ENCODE measurements at regions of chr17 and their contacts with region 1.

Region 1: DNA sequence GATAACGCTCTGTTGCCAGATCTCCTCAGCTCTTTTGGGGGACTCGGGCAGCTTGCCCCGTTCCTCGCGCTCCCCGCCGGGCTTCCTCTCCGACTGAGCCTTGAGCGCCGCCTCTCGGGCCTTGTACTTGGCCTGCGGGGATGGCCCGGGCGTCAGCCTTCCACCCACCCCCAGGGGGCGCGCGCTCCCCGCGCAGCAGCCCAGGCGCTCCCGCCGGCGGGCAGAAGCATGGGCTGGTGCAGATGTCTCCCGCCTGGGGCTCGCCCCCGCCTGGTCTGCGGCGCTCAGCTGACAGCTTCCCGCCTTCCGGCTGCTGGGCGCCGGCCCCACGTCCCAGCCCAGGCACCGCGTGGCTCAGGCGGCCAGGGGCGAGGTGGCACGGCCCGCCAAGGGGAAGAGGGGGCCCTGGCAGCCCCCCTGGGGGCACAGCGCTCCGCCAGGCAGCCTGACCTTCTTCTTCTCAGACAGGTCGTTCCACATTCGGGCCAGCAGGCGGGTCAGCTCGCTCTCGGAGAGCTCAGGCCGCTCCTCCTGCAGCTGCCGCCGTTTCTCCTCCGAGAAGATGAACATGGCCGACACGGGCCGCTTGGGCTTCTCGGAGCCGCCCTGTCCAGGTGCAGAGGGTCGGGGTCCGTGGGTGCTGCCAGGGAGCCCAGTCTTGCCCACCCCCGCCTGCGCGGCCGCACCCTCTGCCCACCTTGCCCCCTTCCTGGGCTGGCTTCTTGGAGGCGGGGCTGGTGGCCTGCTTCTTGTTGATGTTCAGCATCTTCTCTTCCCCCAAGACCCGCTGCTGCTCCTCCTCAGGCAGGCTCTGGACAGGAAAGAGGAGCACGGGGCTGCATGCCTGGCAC is 8.9 kb downstream of the UBTF start:
- DNase-seq: peak; percentile 90
- H3K4me3 Mint-ChIP-seq: peak overlapping the region; percentile 56
- H3K27ac Mint-ChIP-seq: peak overlapping the region; percentile 88
- H3K4me1 Mint-ChIP-seq: peaks cover 53% of the 10 kb centered on the region
- H3K27me3 Mint-ChIP-seq: no peaks in the 10 kb centered on the region

Region 2: GRCh38 chr17:44110823-44111633 is 99.5 kb before region 1 on chr17:
- CTCF ChIA-PET with region 1: no interaction called
- POLR2A ChIA-PET with region 1: no interaction called
- DNase-seq: peak; percentile 65
- H3K4me3 Mint-ChIP-seq: peak overlapping the region; percentile 30
- H3K27ac Mint-ChIP-seq: no peak overlapping the region
- H3K4me1 Mint-ChIP-seq: peaks cover 22% of the 10 kb centered on the region
- H3K27me3 Mint-ChIP-seq: no peaks in the 10 kb centered on the region

Region 3: DNA sequence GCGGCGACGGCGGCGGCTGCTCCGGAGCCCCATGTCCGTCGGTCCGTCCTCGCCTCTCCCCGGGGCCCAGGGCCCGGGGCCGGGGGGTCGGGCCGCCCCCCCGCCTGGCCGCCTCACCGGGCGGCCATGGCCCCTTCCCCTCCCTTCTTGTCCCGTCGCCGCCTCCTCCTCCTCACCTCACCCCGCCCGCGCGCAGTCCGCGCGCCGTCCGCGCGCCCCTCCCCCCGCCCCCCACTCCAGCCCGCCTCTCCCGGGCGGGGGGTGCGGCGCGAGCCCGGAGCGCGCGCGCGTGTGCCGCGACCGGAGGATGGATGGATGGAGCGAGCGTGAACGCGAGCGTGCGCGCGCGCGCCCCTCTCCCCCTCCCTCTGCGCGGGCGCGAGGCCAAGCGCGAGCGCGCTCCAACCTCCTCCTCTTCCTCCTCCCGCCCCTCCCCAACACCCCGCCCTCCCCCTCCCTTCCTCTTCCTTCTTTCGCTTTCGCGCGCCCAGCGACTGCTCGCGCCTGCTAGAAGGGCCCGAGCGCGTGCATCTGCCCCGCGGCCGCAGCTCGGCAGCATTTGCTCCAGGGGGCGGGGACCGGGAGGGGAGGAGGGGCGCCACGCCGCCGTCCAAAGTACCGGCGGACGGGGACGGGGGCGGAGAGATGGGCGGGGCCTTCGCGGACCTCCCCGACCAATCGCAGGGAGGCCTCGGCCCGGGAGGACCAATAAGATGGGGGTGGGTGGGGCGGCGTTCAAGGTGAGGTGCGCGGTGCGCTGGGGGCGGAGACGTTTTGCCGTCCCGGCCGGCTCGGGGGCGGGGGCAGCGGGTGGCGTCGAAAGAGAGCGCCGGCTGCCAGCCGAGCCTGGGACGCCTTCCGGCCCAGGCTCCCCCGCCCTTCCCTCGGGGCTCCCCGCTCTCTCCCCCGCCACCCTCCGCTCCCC is 10.8 kb before region 1 on chr17 and contains the start of gene ATXN7L3:
- CTCF ChIA-PET with region 1: interaction called, 55 read pairs
- POLR2A ChIA-PET with region 1: interaction called, 5 read pairs
- DNase-seq: peak; percentile 100
- H3K4me3 Mint-ChIP-seq: peak within 1 kb of the TSS; percentile 92
- H3K27ac Mint-ChIP-seq: peak within 1 kb of the TSS; percentile 96
- H3K4me1 Mint-ChIP-seq: peaks cover 63% of the 10 kb centered on the region
- H3K27me3 Mint-ChIP-seq: no peaks in the 10 kb centered on the region
- total RNA-seq, gene ATXN7L3: 110 to 112 TPM

Region 4: DNA sequence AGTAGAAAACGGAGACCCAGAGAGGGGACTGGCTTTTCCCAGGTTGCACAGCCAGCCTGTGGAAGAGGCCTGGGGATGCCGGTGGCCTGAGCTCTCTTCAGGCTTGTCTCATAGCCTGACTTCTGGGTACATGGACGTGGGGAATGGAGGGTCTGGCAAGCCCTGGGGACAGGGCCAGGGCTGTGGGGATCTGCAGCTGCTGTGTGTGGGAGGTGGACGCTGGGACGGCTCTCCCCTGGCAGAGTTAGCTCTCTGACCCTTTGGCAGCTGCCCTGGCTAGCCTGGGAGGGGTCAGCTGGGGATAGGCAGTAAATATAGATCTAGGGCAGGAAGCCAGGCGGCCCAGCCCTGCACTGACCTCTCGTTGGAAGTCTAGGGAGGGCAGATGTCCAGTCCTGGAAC is 36.9 kb after region 1 on chr17:
- CTCF ChIA-PET with region 1: interaction called, 10 read pairs
- POLR2A ChIA-PET with region 1: no interaction called
- DNase-seq: no peak
- H3K4me3 Mint-ChIP-seq: no peak overlapping the region
- H3K27ac Mint-ChIP-seq: peak overlapping the region; percentile 36
- H3K4me1 Mint-ChIP-seq: peaks cover 47% of the 10 kb centered on the region
- H3K27me3 Mint-ChIP-seq: no peaks in the 10 kb centered on the region

Region 5: GRCh38 chr17:44269535-44270240 is 59.1 kb after region 1 on chr17:
- CTCF ChIA-PET with region 1: no interaction called
- POLR2A ChIA-PET with region 1: no interaction called
- DNase-seq: no peak
- H3K4me3 Mint-ChIP-seq: no peak overlapping the region
- H3K27ac Mint-ChIP-seq: no peak overlapping the region
- H3K4me1 Mint-ChIP-seq: no peaks in the 10 kb centered on the region
- H3K27me3 Mint-ChIP-seq: no peaks in the 10 kb centered on the region

Region 6: DNA sequence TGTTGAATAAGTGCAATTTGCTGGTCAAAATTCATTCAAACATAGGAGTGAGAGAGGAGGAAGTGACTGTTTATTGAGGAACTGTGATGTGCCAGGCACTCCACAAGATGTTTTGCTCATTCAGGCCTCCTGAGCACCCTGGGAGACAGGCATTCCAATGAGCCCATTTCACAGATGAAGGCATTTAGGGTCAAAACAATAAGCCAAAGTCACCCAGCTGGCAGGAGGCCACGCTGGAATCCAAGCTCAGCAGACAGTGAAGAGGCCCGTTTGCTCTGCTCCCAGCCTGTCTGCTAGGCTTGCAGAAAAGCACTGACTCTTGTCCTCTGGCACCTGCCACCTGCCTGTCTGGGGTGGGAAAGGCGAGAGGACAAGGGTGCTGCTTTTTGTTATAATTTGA is 124.2 kb after region 1 on chr17:
- CTCF ChIA-PET with region 1: interaction called, 34 read pairs
- POLR2A ChIA-PET with region 1: no interaction called
- DNase-seq: no peak
- H3K4me3 Mint-ChIP-seq: no peak overlapping the region
- H3K27ac Mint-ChIP-seq: no peak overlapping the region
- H3K4me1 Mint-ChIP-seq: peaks cover 6% of the 10 kb centered on the region
- H3K27me3 Mint-ChIP-seq: peaks cover 2% of the 10 kb centered on the region

Region 7: GRCh38 chr17:44350733-44351226 is 140.2 kb after region 1 on chr17:
- CTCF ChIA-PET with region 1: interaction called, 19 read pairs
- POLR2A ChIA-PET with region 1: no interaction called
- DNase-seq: peak; percentile 76
- H3K4me3 Mint-ChIP-seq: no peak overlapping the region
- H3K27ac Mint-ChIP-seq: no peak overlapping the region
- H3K4me1 Mint-ChIP-seq: peaks cover 24% of the 10 kb centered on the region
- H3K27me3 Mint-ChIP-seq: peaks cover 8% of the 10 kb centered on the region

Measured in activated CD4-positive, alpha-beta T cell treated with anti-CD3 and anti-CD28 coated beads, Interleukin-2, amount 10 ng/mL, durations not matched to agents 7 days and 5 days (primary cell).